HepG2 (cell line): ENCODE measurements at regions of chr3 and their contacts with region 1.

Region 1: DNA sequence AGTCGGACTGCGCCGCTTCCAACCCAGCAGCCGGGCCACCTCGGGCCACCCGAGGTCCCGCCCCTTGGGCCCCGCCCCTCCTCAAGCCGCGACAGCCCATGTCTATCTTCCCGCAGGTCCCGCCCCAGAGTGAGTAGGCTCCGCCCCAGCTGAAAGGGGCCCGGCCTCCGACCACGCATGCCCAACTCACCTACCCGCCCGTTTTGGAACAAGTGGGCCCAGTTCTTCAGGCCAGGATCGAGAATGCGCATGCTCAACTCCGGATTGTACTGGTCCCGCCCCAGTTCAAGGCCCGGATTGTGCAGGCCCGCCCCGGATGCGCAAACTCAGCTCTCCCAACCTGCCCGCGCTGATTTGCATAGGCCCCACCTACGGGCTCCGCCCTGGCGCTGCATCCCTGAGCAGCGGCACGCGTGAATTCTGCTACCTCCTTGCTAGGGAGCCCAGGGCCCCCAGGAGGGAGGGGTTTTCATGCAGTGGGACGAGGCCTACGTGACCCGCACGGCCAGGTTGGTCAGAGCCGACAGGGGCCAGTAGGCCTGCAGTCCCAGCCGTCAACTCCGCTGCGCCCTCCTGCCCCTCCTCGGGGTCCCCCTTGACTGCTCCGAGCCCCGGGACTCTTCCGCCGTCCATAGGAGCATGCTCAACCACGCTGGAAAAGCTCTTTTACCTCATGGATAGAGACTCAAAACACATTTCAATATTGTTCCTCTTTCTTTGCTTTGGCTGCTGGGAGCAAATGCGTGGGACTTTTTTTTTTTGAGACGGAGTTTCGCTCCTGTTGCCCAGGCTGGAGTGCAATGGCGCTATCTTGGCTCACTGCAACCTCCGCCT is at the start of gene PFKFB4:
- DNase-seq: peak; percentile 98
- ATAC-seq: peak; percentile 79
- H3K4me3 ChIP-seq: peak within 1 kb of the TSS; percentile 76 to 98 (median 92)
- H3K27ac ChIP-seq: peak within 1 kb of the TSS; percentile 77
- H3K4me1 ChIP-seq: peaks cover 88% of the 10 kb centered on the region
- H3K27me3 ChIP-seq: no peaks in the 10 kb centered on the region; a peak in 1 of 5 replicates
- CTCF ChIP-seq: peak; percentile 55
- EP300 ChIP-seq: peak in 1 of 2 experiments; percentile 34; a peak in 1 of 4 replicates
- POLR2A ChIP-seq: peak in 1 of 2 experiments; percentile 28; a peak in 2 of 4 replicates
- RAD21 ChIP-seq: no peak
- total RNA-seq, gene PFKFB4: 6.4 and 7.1 TPM in 2 replicates

Region 2: DNA sequence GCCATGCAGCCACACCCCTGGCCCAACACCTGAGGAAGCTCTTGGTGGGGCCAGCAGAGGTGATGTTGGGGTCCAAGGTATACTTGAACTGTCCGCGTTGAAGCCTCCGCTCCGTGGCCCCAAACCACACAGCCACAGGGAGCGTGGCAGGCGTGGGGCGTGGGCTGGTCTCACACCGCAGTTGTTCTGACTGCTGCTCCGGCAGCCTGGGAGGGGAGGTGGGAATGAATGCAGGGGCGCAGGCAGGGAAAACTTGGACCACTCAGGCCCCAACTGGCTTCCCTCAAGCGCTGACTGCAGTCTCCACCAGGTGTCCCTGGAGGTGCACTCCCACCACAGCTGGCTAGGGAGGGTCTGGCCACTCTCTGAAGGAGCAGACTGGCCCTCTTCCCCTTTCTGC is 141.5 kb before region 1 on chr3:
- CTCF ChIA-PET with region 1: no interaction called
- POLR2A ChIA-PET with region 1: no interaction called
- in situ Hi-C with region 1: no loop called
- intact Hi-C with region 1: no loop called
- DNase-seq: no peak
- ATAC-seq: peak; percentile 30
- H3K4me3 ChIP-seq: no peak overlapping the region
- H3K27ac ChIP-seq: no peak overlapping the region
- H3K4me1 ChIP-seq: no peaks in the 10 kb centered on the region
- H3K27me3 ChIP-seq: no peaks in the 10 kb centered on the region
- CTCF ChIP-seq: peak; percentile 56
- EP300 ChIP-seq: no peak
- POLR2A ChIP-seq: no peak
- RAD21 ChIP-seq: peak; percentile 60

Region 3: GRCh38 chr3:48465531-48466378 is 91.3 kb before region 1 on chr3:
- CTCF ChIA-PET with region 1: no interaction called
- POLR2A ChIA-PET with region 1: interaction called, 4 read pairs
- in situ Hi-C with region 1: loop called (anchors 5 kb)
- intact Hi-C with region 1: no loop called
- DNase-seq: peak; percentile 96
- ATAC-seq: peak; percentile 93
- H3K4me3 ChIP-seq: no peak overlapping the region
- H3K27ac ChIP-seq: peak overlapping the region; percentile 85
- H3K4me1 ChIP-seq: peaks cover 51% of the 10 kb centered on the region
- H3K27me3 ChIP-seq: no peaks in the 10 kb centered on the region
- CTCF ChIP-seq: peak; percentile 97
- EP300 ChIP-seq: peak in 1 of 2 experiments; percentile 23; a peak in 2 of 4 replicates
- POLR2A ChIP-seq: no peak
- RAD21 ChIP-seq: peak; percentile 98

Region 4: GRCh38 chr3:48623851-48624547 is 67.0 kb after region 1 on chr3:
- CTCF ChIA-PET with region 1: no interaction called
- POLR2A ChIA-PET with region 1: interaction called, 7 read pairs
- in situ Hi-C with region 1: no loop called
- intact Hi-C with region 1: loop called (anchors 5 kb)
- DNase-seq: peak; percentile 93
- ATAC-seq: peak; percentile 71
- H3K4me3 ChIP-seq: peak overlapping the region; percentile 8 to 41 (median 23); a peak in 4 of 6 replicates
- H3K27ac ChIP-seq: peak overlapping the region; percentile 93
- H3K4me1 ChIP-seq: peaks cover 72% of the 10 kb centered on the region
- H3K27me3 ChIP-seq: no peaks in the 10 kb centered on the region
- CTCF ChIP-seq: 0 out of 2 replicates have a peak, but pooled peaks have one; percentile 7
- EP300 ChIP-seq: peak in 1 of 2 experiments; percentile 81; a peak in 2 of 4 replicates
- POLR2A ChIP-seq: no peak; a peak in 1 of 4 replicates
- RAD21 ChIP-seq: no peak

Region 5: DNA sequence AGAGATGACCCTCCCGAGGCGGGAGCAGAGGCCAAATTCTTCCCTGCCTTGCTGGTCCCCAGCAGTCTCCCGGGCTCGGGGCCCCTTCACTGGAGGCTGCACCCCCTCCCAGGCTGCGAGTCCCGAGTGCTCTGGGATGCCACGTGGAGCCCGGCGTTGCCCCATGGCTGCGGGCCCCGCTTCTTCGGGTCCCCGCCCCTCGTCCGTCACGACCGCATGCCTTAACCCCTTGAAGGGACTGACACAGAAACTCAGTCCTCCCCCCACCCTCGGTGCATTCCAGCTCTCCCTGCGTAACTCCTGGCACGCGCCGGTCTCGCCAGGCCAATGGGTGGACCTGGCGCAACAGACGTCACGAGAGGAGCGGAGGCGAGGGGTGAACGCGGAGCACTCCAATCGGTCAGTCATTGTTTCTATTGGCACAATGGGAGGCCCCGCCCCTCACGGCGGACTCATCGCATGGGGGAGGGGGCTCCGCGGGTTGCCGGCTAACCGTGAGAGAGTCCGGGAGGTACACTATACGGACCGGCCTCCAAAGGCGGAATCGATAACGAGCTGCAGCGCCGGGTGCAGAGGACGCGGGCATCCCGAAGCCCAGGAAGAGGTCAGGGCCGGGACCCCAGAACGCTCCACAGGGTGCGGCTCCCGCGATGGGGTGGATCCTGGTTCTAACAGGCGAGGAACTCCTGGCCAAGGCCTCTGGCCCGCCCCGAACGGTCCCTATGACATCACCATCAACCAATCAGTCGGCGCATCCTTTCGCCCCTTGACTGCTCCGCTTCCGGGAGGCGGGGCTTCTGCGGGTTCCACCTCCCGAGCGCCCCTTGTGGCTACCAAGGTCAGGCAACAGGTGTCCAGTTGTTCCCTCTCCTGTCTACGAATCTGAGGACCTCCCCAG is 106.7 kb after region 1 on chr3:
- CTCF ChIA-PET with region 1: no interaction called
- POLR2A ChIA-PET with region 1: interaction called, 10 read pairs
- in situ Hi-C with region 1: no loop called
- intact Hi-C with region 1: no loop called
- DNase-seq: peak; percentile 96
- ATAC-seq: peak; percentile 86
- H3K4me3 ChIP-seq: peak overlapping the region; percentile 50 to 77 (median 58); a peak in 5 of 6 replicates
- H3K27ac ChIP-seq: peak overlapping the region; percentile 96
- H3K4me1 ChIP-seq: peaks cover 21% of the 10 kb centered on the region
- H3K27me3 ChIP-seq: no peaks in the 10 kb centered on the region
- CTCF ChIP-seq: peak; percentile 87
- EP300 ChIP-seq: peak in 1 of 2 experiments; percentile 63; a peak in 3 of 4 replicates
- POLR2A ChIP-seq: no peak; a peak in 1 of 4 replicates
- RAD21 ChIP-seq: peak; percentile 32; the same call in 1 of the 2 replicates